ENCODE measurements at regions of chr10 and their contacts with region 1.

Region 1: DNA sequence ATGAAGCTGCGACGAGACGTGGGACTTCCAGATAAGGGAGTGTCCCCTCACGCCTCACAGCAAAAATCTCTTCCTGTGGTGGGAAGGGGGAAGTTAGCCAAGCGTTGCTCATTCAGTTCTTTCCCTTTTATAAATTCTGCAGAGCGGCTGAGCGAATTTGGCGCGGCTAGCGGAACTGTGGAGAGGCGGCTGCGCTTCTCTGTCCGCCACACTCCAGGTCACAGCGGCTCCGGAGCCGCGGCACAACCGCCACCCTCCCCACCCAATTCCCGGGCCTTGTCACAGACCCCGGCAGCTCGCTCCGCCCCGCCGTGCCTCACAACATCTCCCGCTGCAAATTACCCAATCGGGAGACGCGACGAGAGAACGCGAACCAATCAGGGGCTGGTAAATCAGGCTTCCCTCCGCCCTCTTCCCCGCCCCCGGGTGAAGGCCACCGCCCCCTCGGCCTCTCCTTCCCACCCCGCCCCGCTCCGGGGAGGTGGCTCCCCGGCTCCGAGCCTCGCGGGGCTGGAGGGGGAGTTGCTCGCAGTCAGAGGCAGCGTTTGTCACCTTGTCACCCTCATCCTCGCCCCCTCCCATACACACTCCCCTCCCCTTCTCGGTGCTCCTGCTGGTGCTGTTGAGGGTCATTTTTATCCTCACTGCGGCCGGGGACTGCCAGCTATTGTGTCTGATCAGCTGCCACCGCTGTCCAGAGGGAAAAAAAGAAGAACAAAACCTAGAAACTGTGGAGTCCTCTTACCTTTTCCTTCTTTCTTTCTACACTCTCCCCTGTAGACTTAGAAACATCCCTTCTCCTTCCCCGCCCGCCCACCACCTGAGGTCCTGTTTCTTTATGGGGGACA is 918 bp upstream of the ARHGAP21 start:
- DNase-seq: peak; percentile 98 to 99 (median 98)
- ATAC-seq: peak; percentile 92 to 97 (median 94)
- H3K4me3 ChIP-seq: peak overlapping the region; percentile 59 to 96 (median 86)
- H3K27ac ChIP-seq: peak overlapping the region; percentile 93 to 99 (median 97)
- H3K4me1 ChIP-seq: peaks cover 0 to 33% (median 23%) of the 10 kb centered on the region in 12 donors
- H3K27me3 ChIP-seq: no peaks in the 10 kb centered on the region
- CTCF ChIP-seq: no peak
- POLR2A ChIP-seq: peak; percentile 76 to 97

Region 2: DNA sequence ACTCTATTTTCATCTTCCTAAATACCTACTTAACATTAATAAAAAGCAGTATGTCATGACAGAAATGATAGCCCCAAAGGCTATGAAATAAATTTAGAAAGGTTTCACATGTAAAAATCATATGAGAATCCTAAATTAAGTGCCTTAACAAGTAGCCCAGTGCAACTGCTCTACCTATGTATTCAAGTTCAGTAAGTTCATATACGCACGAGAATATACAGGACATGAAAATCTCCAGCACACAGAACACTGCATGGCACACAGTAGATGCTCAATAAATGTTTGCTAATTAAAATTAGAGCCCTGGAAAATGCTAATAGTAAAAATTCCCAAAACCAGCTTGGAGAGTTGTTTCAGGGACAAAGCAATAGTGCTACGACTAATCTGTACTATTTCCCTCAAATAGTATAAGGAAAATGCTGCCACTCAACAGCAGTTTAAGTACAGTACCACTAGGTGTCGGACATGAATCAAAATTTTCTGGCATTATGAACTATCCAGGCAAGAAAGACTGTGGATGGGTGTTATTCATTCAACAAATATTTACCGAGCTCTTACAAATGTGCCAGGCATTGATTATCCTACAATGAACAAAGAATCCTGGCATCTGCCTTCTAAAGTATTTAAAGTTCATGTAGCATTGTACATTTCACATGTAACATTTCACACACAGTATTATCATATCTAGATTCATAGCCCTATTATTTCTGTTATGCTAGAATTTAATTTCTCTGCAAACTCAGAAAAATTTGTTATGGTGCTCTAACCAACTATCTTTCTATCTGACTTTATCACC is 81.8 kb before region 1 on chr10:
- intact Hi-C with region 1: loop called in 8 of 10 experiments (anchors 1 to 5 kb)
- DNase-seq: peak in 1 of 5 donors; percentile 16
- ATAC-seq: peak; percentile 61 to 91 (median 88)
- H3K4me3 ChIP-seq: no peak overlapping the region
- H3K27ac ChIP-seq: no peak overlapping the region
- H3K4me1 ChIP-seq: peaks cover 0 to 50% (median 15%) of the 10 kb centered on the region in 12 donors
- H3K27me3 ChIP-seq: no peaks in the 10 kb centered on the region
- CTCF ChIP-seq: peak; percentile 66 to 87 (median 81)
- POLR2A ChIP-seq: no peak

Region 3: GRCh38 chr10:24685958-24686540 is 38.6 kb before region 1 on chr10:
- intact Hi-C with region 1: loop called in 1 of 10 experiments (anchors 5 kb)
- DNase-seq: no peak
- ATAC-seq: peak in 3 of 4 donors; percentile 66 to 82 (median 72)
- H3K4me3 ChIP-seq: no peak overlapping the region
- H3K27ac ChIP-seq: no peak overlapping the region
- H3K4me1 ChIP-seq: peaks cover 0 to 45% (median 27%) of the 10 kb centered on the region in 12 donors
- H3K27me3 ChIP-seq: no peaks in the 10 kb centered on the region
- CTCF ChIP-seq: no peak
- POLR2A ChIP-seq: no peak

Region 4: GRCh38 chr10:24982319-24983112 is 257.9 kb after region 1 on chr10:
- intact Hi-C with region 1: loop called in 4 of 10 experiments (anchors 1 to 10 kb)
- DNase-seq: no peak
- ATAC-seq: no peak
- H3K4me3 ChIP-seq: no peak overlapping the region
- H3K27ac ChIP-seq: peak overlapping the region in 3 of 12 donors; percentile 28 to 70 (median 48)
- H3K4me1 ChIP-seq: peaks cover 0 to 27% (median 5%) of the 10 kb centered on the region in 12 donors
- H3K27me3 ChIP-seq: no peaks in the 10 kb centered on the region
- CTCF ChIP-seq: no peak
- POLR2A ChIP-seq: no peak

Region 5: GRCh38 chr10:25016376-25017154 is 292.0 kb after region 1 on chr10 and contains the start of gene THNSL1:
- intact Hi-C with region 1: loop called in 6 of 10 experiments (anchors 1 to 10 kb)
- DNase-seq: peak; percentile 99 to 100 (median 99)
- ATAC-seq: peak; percentile 100
- H3K4me3 ChIP-seq: peak within 1 kb of the TSS; percentile 41 to 80 (median 68)
- H3K27ac ChIP-seq: peak within 1 kb of the TSS; percentile 72 to 98 (median 92)
- H3K4me1 ChIP-seq: peaks cover 0 to 23% (median 9%) of the 10 kb centered on the region in 12 donors
- H3K27me3 ChIP-seq: no peaks in the 10 kb centered on the region
- CTCF ChIP-seq: no peak
- POLR2A ChIP-seq: peak in 1 of 2 donors; percentile 70
- total RNA-seq, gene THNSL1: 1.9 to 6.9 (median 4.1) TPM

Region 6: GRCh38 chr10:25786161-25786560 is 1061.6 kb after region 1 on chr10:
- intact Hi-C with region 1: no loop called
- DNase-seq: no peak
- ATAC-seq: no peak
- H3K4me3 ChIP-seq: no peak overlapping the region
- H3K27ac ChIP-seq: no peak overlapping the region
- H3K4me1 ChIP-seq: no peaks in the 10 kb centered on the region
- H3K27me3 ChIP-seq: peaks cover 0 to 5% (median 0%) of the 10 kb centered on the region in 9 donors
- CTCF ChIP-seq: no peak
- POLR2A ChIP-seq: no peak

Measured in heart left ventricle (tissue), 16 donors.